ENCODE measurements at regions of chr17 and their contacts with region 1.

Region 1: GRCh38 chr17:5078106-5079028 is at the start of gene ZFP3:
- DNase-seq: peak; percentile 47 to 77 (median 67)
- ATAC-seq: peak; percentile 85
- H3K4me3 ChIP-seq: peak within 1 kb of the TSS; percentile 81
- H3K4me3 Mint-ChIP-seq: peak within 1 kb of the TSS; percentile 89 to 98 (median 95)
- H3K27ac ChIP-seq: peak within 1 kb of the TSS; percentile 81
- H3K27ac Mint-ChIP-seq: peak within 1 kb of the TSS; percentile 87 to 96 (median 94)
- H3K4me1 ChIP-seq: peaks cover 13 to 15% of the 10 kb centered on the region in 2 donors
- H3K4me1 Mint-ChIP-seq: peaks cover 12 to 41% (median 35%) of the 10 kb centered on the region in 7 donors
- H3K27me3 ChIP-seq: no peaks in the 10 kb centered on the region
- H3K27me3 Mint-ChIP-seq: peaks cover 0 to 2% (median 0%) of the 10 kb centered on the region in 5 donors
- total RNA-seq, gene ZFP3: 3.5 to 14.8 (median 5.7) TPM

Region 2: DNA sequence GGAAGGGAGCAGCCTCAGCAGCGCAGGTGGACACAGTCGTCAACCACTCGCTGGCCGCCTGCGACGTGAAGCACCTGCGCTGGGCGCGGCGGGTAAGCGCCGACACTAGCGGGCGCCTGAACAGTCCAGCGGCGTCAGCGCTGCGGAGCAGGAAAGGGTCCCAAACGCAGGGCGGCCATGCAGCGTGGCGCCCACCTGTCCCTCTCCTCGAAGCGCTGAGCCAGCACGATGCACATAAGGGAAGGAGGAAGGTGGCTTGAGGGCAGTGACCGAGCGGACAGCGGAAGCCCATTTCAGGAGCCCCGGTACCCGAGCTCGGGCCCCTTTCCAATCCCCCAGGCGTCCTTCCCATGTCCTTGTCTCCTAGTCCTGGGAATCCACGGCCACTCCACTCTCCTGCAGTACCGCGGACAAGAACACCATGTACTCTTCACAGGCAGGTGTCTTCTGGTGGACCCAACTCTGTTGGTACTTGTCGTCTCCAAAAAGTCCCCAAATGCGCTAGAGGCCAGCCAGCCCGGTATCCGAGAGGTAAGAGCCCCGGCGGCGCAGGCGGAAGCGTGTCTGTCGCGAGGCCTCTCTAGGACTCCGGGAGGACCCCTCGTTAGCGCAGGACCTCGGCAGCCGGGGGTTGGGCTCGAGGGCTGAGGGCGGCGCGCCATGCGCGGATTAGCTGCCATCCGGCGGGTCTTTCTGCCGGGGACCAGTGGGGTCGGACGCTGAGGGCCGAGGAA is 18.9 kb after region 1 on chr17:
- CTCF ChIA-PET with region 1: interaction called, 5 read pairs
- POLR2A ChIA-PET with region 1: interaction called, 3 read pairs
- intact Hi-C with region 1: loop called in 1 of 2 experiments (anchors 2 kb)
- DNase-seq: peak in 7 of 9 donors; percentile 29 to 58 (median 48)
- ATAC-seq: peak; percentile 87
- H3K4me3 ChIP-seq: peak overlapping the region; percentile 59
- H3K4me3 Mint-ChIP-seq: peak overlapping the region; percentile 28 to 92 (median 89)
- H3K27ac ChIP-seq: no peak overlapping the region
- H3K27ac Mint-ChIP-seq: peak overlapping the region in 4 of 9 donors; percentile 25 to 59 (median 48)
- H3K4me1 ChIP-seq: no peaks in the 10 kb centered on the region
- H3K4me1 Mint-ChIP-seq: peaks cover 6 to 16% (median 12%) of the 10 kb centered on the region in 7 donors
- H3K27me3 ChIP-seq: no peaks in the 10 kb centered on the region
- H3K27me3 Mint-ChIP-seq: peaks cover 0 to 20% (median 0%) of the 10 kb centered on the region in 5 donors